Motor neuron (in vitro differentiated cells): ENCODE measurements at regions of chr13 and their contacts with region 1.

Region 1: GRCh38 chr13:79448413-79448812 is 32.5 kb upstream of the NDFIP2 start:
- ATAC-seq: no peak
- H3K4me3 ChIP-seq: no peak overlapping the region
- H3K27ac ChIP-seq: no peak overlapping the region
- H3K4me1 ChIP-seq: peaks cover 0 to 6% of the 10 kb centered on the region in 2 donors

Region 2: GRCh38 chr13:78862446-78862845 is 586.0 kb before region 1 on chr13:
- in situ Hi-C with region 1: no loop called
- ATAC-seq: peak in 1 of 8 experiments; percentile 55
- H3K4me3 ChIP-seq: no peak overlapping the region
- H3K27ac ChIP-seq: no peak overlapping the region
- H3K4me1 ChIP-seq: no peaks in the 10 kb centered on the region

Region 3: DNA sequence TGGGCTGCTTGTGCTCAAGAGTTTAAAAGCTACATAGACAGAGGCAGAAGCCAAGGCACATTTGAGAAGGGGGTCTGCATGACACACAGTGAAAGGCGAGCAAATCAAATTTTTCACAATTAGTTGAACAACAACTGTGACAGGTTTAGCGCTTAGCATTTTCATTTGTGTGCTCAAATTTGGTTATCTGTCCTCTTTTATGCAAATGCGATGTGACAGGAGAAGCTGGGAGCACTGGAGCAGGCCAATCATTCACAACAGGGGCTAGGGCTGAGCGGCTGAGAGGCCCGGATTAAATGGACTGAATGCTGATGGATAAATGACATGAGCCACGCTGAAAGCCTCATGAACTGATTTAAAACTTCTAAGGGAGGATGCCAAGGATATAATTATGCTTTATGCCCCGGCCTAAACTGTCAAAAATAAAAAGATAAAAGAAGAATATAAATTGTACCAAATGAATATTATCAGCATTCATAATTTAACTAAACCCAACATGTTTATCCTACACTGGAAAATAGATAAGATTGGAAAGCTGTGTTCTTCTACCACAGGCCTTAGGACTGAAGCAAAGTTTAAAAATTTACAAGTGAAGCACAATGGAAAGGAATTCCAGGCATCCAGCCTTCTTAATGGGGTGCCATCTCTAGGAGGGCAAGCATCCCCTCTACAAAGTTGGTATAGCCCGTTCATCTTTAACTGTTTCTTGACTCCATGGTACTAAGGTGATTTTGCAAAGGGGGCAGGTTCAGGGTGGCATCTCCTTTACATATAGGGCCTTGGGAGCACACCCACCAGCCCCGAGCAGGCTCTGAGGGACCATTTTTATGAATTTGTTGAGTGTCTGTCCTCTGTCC is 160.2 kb before region 1 on chr13:
- in situ Hi-C with region 1: no loop called
- ATAC-seq: peak in 2 of 8 experiments; percentile 32 to 37
- H3K4me3 ChIP-seq: no peak overlapping the region
- H3K27ac ChIP-seq: no peak overlapping the region
- H3K4me1 ChIP-seq: peaks cover 0 to 12% of the 10 kb centered on the region in 2 donors

Region 4: DNA sequence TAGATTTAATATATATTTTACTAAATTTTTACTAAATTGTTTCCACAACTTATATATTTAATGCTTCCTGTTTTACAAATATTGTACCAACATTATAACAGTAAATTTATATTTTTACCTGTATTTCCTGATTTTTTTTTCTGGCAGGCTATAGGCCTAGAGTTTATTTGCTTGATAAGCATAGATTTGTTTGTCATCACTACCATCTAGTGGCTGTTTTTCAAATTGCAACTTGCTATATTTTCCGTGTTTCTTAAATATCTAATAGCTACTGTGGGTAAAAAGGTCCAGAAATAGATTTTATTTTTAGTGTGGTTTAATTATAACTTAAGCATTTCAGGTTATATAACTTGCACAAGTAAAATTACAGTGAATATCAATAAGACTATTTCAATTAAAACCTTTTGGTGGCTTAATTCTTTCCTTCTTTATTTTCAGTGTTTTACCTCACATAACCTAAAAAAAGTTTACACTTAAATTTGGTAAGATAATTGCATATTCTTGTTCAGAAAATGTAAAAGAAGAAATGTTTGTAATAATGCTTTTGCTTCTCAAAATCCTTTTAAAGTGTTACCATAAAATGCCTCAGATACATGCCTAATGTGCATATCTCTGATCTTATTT is 93.1 kb after region 1 on chr13:
- in situ Hi-C with region 1: loop called in 2 of 9 experiments (anchors 25 kb)
- ATAC-seq: peak in 3 of 8 experiments; percentile 32 to 41 (median 36)
- H3K4me3 ChIP-seq: no peak overlapping the region
- H3K27ac ChIP-seq: no peak overlapping the region
- H3K4me1 ChIP-seq: no peaks in the 10 kb centered on the region

Region 5: GRCh38 chr13:79581870-79582315 is 133.5 kb after region 1 on chr13:
- in situ Hi-C with region 1: no loop called
- ATAC-seq: peak in 3 of 8 experiments; percentile 53 to 99 (median 97)
- H3K4me3 ChIP-seq: no peak overlapping the region
- H3K27ac ChIP-seq: no peak overlapping the region
- H3K4me1 ChIP-seq: no peaks in the 10 kb centered on the region

Region 6: DNA sequence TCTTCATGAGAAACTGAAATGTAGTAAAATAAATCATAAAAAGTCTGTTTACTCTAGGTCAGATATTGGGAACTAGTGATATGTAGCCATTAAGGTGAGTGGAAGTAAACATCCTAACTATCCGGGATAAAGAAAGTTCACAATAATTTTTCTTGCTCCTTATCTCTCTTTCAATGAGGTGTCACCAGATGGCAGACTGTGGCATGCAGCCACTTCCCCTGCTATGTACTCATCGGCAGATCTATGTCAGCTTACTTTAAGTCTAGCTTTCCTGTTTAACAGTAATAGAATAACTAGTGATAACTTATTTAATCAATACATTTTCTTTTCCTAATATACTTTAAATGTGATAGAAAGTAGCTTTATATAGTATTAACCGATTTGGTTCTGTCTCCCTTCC is 214.5 kb after region 1 on chr13:
- in situ Hi-C with region 1: no loop called
- ATAC-seq: no peak
- H3K4me3 ChIP-seq: no peak overlapping the region
- H3K27ac ChIP-seq: no peak overlapping the region
- H3K4me1 ChIP-seq: no peaks in the 10 kb centered on the region